ENCODE measurements at regions of chr7 and their contacts with region 1.

Region 1: DNA sequence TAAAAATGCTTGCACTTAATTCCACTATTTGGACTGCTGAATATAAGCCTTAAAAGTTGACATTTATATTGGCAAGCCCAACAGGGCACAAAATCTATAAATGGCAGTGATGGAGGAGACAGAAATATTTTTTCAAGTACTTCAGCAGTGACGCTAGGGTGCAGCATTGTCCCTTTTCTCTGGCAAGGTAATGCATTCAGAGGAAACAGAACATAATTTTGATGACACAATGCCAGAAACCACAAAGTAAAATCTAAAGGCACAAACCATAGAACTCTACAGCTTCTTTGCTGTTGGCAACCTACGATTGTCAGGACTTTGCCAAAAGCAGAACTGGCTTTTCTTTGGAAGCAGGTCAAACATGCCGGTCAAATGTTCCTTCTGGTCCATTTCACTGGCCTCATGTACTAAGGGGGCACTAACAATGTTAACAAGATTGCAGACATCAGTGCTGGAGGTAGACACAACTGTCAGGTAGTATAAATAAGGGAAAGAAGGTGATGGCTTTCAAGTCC is 30.9 kb upstream of the FAM133B start:
- DNase-seq: peak; percentile 68
- H3K4me3 ChIP-seq: no peak overlapping the region
- H3K27ac ChIP-seq: no peak overlapping the region
- H3K4me1 ChIP-seq: no peaks in the 10 kb centered on the region
- H3K27me3 ChIP-seq: no peaks in the 10 kb centered on the region
- CTCF ChIP-seq: peak; percentile 39 to 83 (median 80)
- POLR2A ChIP-seq: no peak

Region 2: GRCh38 chr7:92824450-92824849 is 203.4 kb after region 1 on chr7:
- intact Hi-C with region 1: no loop called
- DNase-seq: no peak
- H3K4me3 ChIP-seq: no peak overlapping the region
- H3K27ac ChIP-seq: no peak overlapping the region
- H3K4me1 ChIP-seq: peaks cover 4% of the 10 kb centered on the region
- H3K27me3 ChIP-seq: no peaks in the 10 kb centered on the region
- CTCF ChIP-seq: no peak
- POLR2A ChIP-seq: no peak

Region 3: DNA sequence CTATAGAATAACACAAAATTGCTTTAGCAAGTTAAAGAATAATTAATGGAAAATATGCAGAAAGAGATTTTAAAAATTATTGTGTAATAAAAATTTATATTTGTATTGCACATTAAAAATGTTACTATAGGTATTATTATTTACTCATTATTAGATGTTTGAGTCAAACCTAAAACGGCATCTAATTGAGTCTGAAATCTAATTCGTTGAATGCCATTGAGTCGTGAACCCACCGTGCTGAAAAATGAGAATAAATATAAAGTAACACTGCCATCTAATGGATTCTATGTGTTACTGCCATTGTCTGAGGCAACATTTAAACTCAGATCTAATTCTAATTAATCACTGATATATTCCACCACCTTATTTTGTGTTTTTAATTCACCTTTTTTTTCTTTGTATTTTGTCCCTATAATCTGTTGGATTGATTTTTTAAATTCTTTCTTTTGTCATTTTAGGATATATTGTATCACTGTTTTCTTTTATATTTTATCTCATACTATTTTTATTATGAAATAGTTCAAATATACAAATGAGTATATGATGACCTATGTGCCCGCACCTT is 434.5 kb after region 1 on chr7:
- intact Hi-C with region 1: loop called (anchors 5 kb)
- DNase-seq: no peak
- H3K4me3 ChIP-seq: no peak overlapping the region
- H3K27ac ChIP-seq: no peak overlapping the region
- H3K4me1 ChIP-seq: no peaks in the 10 kb centered on the region
- H3K27me3 ChIP-seq: no peaks in the 10 kb centered on the region
- CTCF ChIP-seq: peak; percentile 34 to 81 (median 78)
- POLR2A ChIP-seq: no peak